Esophagus muscularis mucosa (tissue), 4 donors: ENCODE measurements at regions of chr1 and their contacts with region 1.

Region 1: DNA sequence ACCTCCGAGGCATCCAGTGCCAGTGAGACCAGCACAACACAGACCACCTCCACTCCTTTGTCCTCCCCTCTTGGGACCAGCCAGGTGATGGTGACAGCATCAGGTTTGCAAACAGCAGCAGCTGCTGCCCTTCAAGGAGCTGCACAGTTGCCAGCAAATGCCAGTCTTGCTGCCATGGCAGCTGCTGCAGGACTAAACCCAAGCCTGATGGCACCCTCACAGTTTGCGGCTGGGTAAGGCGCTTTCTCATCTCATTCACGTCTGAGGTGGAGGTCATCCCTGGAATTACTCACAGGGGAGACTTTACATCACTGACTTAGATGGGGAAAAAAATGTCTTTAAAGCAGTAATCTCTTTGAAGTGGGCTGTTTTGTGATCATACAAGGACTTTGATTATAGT is 106.3 kb downstream of the CD247 start:
- DNase-seq: no peak
- H3K4me3 ChIP-seq: no peak overlapping the region
- H3K27ac ChIP-seq: no peak overlapping the region
- H3K4me1 ChIP-seq: no peaks in the 10 kb centered on the region
- H3K27me3 ChIP-seq: no peaks in the 10 kb centered on the region
- CTCF ChIP-seq: no peak
- EP300 ChIP-seq: no peak
- POLR2A ChIP-seq: no peak

Region 2: DNA sequence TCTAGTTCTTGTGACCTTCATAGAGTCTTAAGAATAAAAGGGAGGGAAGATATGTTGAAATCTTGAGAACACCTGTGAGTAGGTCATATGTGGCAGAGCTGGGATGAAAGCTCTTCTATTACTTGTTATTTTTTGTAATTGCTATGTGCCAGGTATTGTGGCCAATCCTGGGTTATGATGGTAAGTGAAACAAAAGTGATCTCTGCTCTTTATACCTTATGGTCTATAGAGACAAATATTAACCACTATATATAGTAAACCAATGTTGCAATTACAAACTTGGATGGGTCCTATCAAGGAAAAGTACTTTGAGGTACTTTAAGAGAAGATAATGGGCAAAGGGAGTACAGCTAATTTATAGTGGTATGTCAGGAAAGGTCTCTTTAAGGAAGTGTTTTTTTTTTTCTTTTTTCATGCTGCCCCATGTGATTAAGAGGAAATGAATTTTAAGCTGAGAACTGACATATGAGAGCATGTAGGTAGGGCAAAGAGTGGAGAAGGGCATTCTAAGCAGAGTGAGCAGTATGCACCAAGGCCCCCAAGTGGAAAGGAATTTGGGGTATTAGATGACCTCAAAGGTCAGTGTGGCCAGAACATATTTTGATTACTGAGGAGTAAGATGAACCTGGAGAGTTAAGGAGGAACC is 148.1 kb before region 1 on chr1:
- intact Hi-C with region 1: loop called (anchors 10 kb)
- DNase-seq: no peak
- H3K4me3 ChIP-seq: no peak overlapping the region
- H3K27ac ChIP-seq: no peak overlapping the region
- H3K4me1 ChIP-seq: peaks cover 32 to 61% (median 41%) of the 10 kb centered on the region in 4 donors
- H3K27me3 ChIP-seq: no peaks in the 10 kb centered on the region
- CTCF ChIP-seq: no peak
- EP300 ChIP-seq: no peak
- POLR2A ChIP-seq: no peak